Endothelial cell of umbilical vein (primary cell): ENCODE measurements at regions of chr14 and their contacts with region 1.

Region 1: GRCh38 chr14:23379366-23380196 is 2.7 kb downstream of the CMTM5 start:
- DNase-seq: peak; percentile 34
- H3K4me3 ChIP-seq: no peak overlapping the region
- H3K27ac ChIP-seq: no peak overlapping the region
- H3K4me1 ChIP-seq: no peaks in the 10 kb centered on the region
- H3K27me3 ChIP-seq: no peaks in the 10 kb centered on the region
- CTCF ChIP-seq: peak; percentile 80 to 92
- POLR2A ChIP-seq: no peak

Region 2: DNA sequence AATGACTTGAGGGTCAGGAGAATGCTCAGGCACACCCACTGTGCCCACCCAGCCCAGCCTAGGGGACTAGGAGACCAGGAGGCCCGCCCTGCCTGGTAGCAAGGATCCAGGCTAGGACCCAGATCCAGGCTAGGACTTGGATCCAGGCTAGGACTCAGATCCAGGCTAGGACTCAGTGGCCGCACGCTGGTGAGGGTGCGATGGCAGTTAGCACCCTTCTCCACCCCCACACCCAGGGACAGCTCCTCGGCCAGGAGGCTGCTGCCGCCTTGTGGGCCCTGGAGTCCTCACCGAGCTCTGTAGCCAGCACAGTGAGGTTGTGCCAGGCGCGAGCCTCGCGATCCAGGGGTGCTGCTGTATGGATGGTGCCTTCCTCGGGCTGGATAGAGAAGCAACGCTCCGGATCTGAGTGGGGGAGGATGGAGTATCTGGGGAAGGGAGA is 327.4 kb before region 1 on chr14:
- CTCF ChIA-PET with region 1: no interaction called
- POLR2A ChIA-PET with region 1: no interaction called
- dilution Hi-C with region 1: no loop called
- intact Hi-C with region 1: no loop called
- DNase-seq: no peak
- H3K4me3 ChIP-seq: no peak overlapping the region
- H3K27ac ChIP-seq: no peak overlapping the region
- H3K4me1 ChIP-seq: peaks cover 14% of the 10 kb centered on the region
- H3K27me3 ChIP-seq: no peaks in the 10 kb centered on the region
- CTCF ChIP-seq: no peak
- POLR2A ChIP-seq: no peak

Region 3: GRCh38 chr14:23406725-23407355 is 27.3 kb after region 1 on chr14:
- CTCF ChIA-PET with region 1: no interaction called
- POLR2A ChIA-PET with region 1: no interaction called
- dilution Hi-C with region 1: no loop called
- intact Hi-C with region 1: no loop called
- DNase-seq: no peak
- H3K4me3 ChIP-seq: no peak overlapping the region
- H3K27ac ChIP-seq: no peak overlapping the region
- H3K4me1 ChIP-seq: no peaks in the 10 kb centered on the region
- H3K27me3 ChIP-seq: no peaks in the 10 kb centered on the region
- CTCF ChIP-seq: no peak
- POLR2A ChIP-seq: no peak

Region 4: GRCh38 chr14:23423657-23424056 is 44.1 kb after region 1 on chr14:
- CTCF ChIA-PET with region 1: interaction called, 10 read pairs
- POLR2A ChIA-PET with region 1: no interaction called
- dilution Hi-C with region 1: no loop called
- intact Hi-C with region 1: no loop called
- DNase-seq: no peak
- H3K4me3 ChIP-seq: no peak overlapping the region
- H3K27ac ChIP-seq: no peak overlapping the region
- H3K4me1 ChIP-seq: no peaks in the 10 kb centered on the region
- H3K27me3 ChIP-seq: no peaks in the 10 kb centered on the region
- CTCF ChIP-seq: no peak
- POLR2A ChIP-seq: no peak